ENCODE measurements at regions of chr10 and their contacts with region 1.

Region 1: GRCh38 chr10:89217057-89217990 is 10.2 kb upstream of the CH25H start:
- DNase-seq: peak; percentile 12
- ATAC-seq: peak; percentile 83
- H3K4me3 ChIP-seq: no peak overlapping the region
- H3K27ac ChIP-seq: no peak overlapping the region
- H3K4me1 ChIP-seq: peaks cover 3% of the 10 kb centered on the region; the same call in 1 of the 2 replicates
- H3K27me3 ChIP-seq: no peaks in the 10 kb centered on the region
- CTCF ChIP-seq: peak; percentile 50 to 66 (median 64)
- EP300 ChIP-seq: no peak
- POLR2A ChIP-seq: no peak
- RAD21 ChIP-seq: peak; percentile 77

Region 2: DNA sequence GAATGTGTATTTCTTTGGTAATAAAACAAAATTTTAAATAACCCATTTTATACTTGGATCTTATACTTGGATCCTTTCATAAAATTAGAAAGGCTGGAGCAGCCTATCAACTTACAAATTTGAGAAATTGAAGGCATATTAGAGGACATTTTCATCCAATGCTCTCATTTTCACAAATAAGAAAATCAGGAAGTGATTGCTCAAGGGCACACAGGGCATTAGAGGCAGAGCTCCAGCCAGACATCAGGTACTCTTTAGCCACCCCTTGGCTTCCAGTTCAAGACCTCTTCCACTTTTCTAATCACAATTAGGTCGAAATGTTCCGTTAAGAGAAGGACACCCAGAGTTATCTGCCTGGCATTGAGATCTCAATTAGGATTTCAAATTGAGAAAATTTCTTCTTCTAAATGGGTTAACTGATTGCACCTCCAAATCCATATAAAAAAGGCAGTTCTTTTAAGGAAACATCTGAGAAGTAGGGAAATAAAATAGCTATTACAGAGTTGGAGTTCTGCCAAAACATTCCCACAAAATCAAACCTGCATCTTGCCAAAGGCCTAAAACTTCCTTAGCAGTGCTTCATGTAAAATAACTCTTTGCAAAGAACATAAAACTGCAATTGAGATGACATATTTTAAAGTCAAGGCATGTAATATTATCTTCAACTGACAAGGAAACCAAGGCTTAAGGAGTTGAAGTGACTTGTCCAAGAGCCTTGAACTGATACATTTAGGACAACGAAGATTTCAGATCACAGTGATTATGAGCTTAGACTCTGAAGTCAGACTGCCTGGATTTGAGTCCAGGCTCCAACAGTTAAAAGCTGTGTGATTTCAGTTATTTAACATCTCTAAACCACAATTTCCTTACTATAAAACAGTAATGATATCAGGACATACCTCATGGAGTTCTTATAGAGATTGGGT is 267.1 kb before region 1 on chr10:
- CTCF ChIA-PET with region 1: interaction called, 10 read pairs
- POLR2A ChIA-PET with region 1: no interaction called
- RAD21 ChIA-PET with region 1: no interaction called
- SMC1A ChIA-PET with region 1: interaction called, 10 read pairs
- in situ Hi-C with region 1: no loop called
- intact Hi-C with region 1: no loop called
- DNase-seq: no peak
- ATAC-seq: no peak
- H3K4me3 ChIP-seq: no peak overlapping the region
- H3K27ac ChIP-seq: no peak overlapping the region
- H3K4me1 ChIP-seq: no peaks in the 10 kb centered on the region; the same call in 1 of the 2 replicates
- H3K27me3 ChIP-seq: no peaks in the 10 kb centered on the region
- CTCF ChIP-seq: no peak
- EP300 ChIP-seq: no peak
- POLR2A ChIP-seq: no peak
- RAD21 ChIP-seq: no peak

Region 3: DNA sequence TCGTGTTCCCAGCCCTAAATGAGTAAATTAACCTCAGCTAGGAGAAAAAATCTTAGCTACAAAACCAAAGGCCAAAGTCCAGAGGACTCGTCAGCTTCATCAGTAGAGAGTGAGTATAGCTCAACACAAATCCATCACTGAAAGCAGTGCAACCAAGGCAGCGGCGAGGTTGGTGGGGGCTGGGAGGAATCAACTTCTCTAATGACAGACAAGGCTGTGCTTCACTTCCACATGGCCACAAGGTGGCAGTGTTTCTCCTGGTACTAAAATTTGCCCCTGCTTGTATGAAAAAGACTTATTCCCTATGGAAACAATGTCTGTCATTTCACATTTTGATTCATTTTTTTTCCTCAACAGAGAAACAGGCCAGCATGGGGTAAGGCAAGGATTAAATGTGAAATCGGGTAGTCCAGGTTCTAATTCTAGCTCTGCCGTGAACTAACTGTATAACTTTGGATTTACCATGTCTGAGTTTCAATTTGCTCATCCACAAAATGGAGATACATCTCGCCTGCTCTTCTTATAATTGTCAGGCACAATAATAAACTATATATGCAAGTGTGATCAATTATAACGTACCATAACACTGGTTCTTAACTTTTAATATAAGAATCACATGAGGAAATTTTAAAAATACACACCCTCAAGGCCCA is 187.4 kb before region 1 on chr10:
- CTCF ChIA-PET with region 1: interaction called, 102 read pairs
- POLR2A ChIA-PET with region 1: no interaction called
- RAD21 ChIA-PET with region 1: interaction called, 45 read pairs
- SMC1A ChIA-PET with region 1: interaction called, 64 read pairs
- in situ Hi-C with region 1: loop called (anchors 5 kb)
- intact Hi-C with region 1: loop called (anchors 1 kb)
- DNase-seq: peak; percentile 24
- ATAC-seq: peak; percentile 70
- H3K4me3 ChIP-seq: no peak overlapping the region
- H3K27ac ChIP-seq: no peak overlapping the region
- H3K4me1 ChIP-seq: peaks cover 26% of the 10 kb centered on the region
- H3K27me3 ChIP-seq: no peaks in the 10 kb centered on the region
- CTCF ChIP-seq: peak; percentile 76 to 90 (median 82)
- EP300 ChIP-seq: no peak
- POLR2A ChIP-seq: no peak
- RAD21 ChIP-seq: peak; percentile 86

Region 4: GRCh38 chr10:89235073-89235798 is 17.9 kb after region 1 on chr10:
- CTCF ChIA-PET with region 1: interaction called, 92 read pairs
- POLR2A ChIA-PET with region 1: no interaction called
- RAD21 ChIA-PET with region 1: interaction called, 17 read pairs
- SMC1A ChIA-PET with region 1: interaction called, 46 read pairs
- in situ Hi-C with region 1: no loop called
- intact Hi-C with region 1: no loop called
- DNase-seq: no peak
- ATAC-seq: no peak
- H3K4me3 ChIP-seq: no peak overlapping the region
- H3K27ac ChIP-seq: no peak overlapping the region
- H3K4me1 ChIP-seq: no peaks in the 10 kb centered on the region
- H3K27me3 ChIP-seq: no peaks in the 10 kb centered on the region
- CTCF ChIP-seq: no peak
- EP300 ChIP-seq: no peak
- POLR2A ChIP-seq: no peak
- RAD21 ChIP-seq: no peak

Region 5: GRCh38 chr10:89296220-89296648 is 78.9 kb after region 1 on chr10:
- CTCF ChIA-PET with region 1: no interaction called
- POLR2A ChIA-PET with region 1: no interaction called
- RAD21 ChIA-PET with region 1: no interaction called
- SMC1A ChIA-PET with region 1: no interaction called
- in situ Hi-C with region 1: no loop called
- intact Hi-C with region 1: no loop called
- DNase-seq: no peak
- ATAC-seq: peak; percentile 75
- H3K4me3 ChIP-seq: peak overlapping the region; percentile 18; the same call in 1 of the 2 replicates
- H3K27ac ChIP-seq: no peak overlapping the region
- H3K4me1 ChIP-seq: peaks cover 15% of the 10 kb centered on the region; the same call in 1 of the 2 replicates
- H3K27me3 ChIP-seq: no peaks in the 10 kb centered on the region
- CTCF ChIP-seq: no peak
- EP300 ChIP-seq: no peak
- POLR2A ChIP-seq: no peak
- RAD21 ChIP-seq: no peak

Region 6: DNA sequence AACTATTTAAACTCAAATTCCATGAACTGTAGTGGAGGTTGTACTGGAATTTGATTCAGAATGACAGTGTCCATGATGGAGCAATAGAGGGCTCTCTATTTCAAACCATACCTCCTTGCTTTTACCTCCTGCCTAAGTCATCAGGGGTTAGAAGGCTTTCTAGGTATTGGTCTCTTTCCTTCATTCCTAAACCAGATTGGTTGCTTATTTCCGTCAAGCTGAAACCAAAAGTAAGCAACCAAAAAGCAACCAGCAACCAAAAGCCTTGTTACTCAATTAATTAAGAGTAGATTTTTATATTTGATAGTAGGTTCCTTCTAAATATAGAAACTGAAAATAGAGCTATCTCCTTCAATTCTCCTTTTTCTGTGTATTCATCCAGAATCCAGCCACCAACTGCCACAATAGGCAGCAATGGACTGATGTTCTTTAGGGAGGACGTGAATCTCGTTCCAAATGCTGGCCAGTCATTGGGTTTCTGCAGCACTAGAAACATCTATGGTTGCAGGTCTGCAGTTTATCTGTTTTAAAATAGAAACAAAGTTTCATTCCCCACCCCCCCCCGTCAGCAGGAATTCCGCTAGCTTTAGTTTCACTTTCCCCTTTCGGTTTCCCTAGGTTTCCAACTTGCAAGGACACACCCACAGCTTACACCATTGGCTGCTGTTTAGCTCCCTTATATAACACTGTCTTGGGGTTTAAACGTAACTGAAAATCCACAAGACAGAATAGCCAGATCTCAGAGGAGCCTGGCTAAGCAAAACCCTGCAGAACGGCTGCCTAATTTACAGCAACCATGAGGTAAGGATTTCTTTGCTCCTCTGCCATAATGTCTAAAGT is 174.8 kb after region 1 on chr10 and contains the start of gene IFIT1:
- CTCF ChIA-PET with region 1: interaction called, 18 read pairs
- POLR2A ChIA-PET with region 1: no interaction called
- RAD21 ChIA-PET with region 1: interaction called, 16 read pairs
- SMC1A ChIA-PET with region 1: interaction called, 8 read pairs
- in situ Hi-C with region 1: no loop called
- intact Hi-C with region 1: loop called (anchors 1 kb)
- DNase-seq: peak; percentile 80
- ATAC-seq: peak; percentile 94
- H3K4me3 ChIP-seq: peak within 1 kb of the TSS; percentile 67
- H3K27ac ChIP-seq: peak within 1 kb of the TSS; percentile 71
- H3K4me1 ChIP-seq: no peaks in the 10 kb centered on the region; the same call in 1 of the 2 replicates
- H3K27me3 ChIP-seq: no peaks in the 10 kb centered on the region
- CTCF ChIP-seq: no peak
- EP300 ChIP-seq: no peak
- POLR2A ChIP-seq: peak; percentile 63
- RAD21 ChIP-seq: no peak
- polyA plus RNA-seq, gene IFIT1: 28.9 to 37.2 TPM

Measured in GM12878 (cell line).